CD4-positive, alpha-beta T cell (primary cell): ENCODE measurements at regions of chr3 and their contacts with region 1.

Region 1: GRCh38 chr3:60053526-60054265 is 1003.9 kb upstream of the CFAP20DC start:
- DNase-seq: peak in 6 of 14 experiments; percentile 20 to 70 (median 34)
- ATAC-seq: no peak
- H3K4me3 ChIP-seq: no peak overlapping the region
- H3K4me3 Mint-ChIP-seq: peak overlapping the region; percentile 50
- H3K27ac ChIP-seq: no peak overlapping the region
- H3K27ac Mint-ChIP-seq: peak overlapping the region; percentile 91
- H3K4me1 ChIP-seq: peaks cover 14% of the 10 kb centered on the region
- H3K4me1 Mint-ChIP-seq: peaks cover 88% of the 10 kb centered on the region
- H3K27me3 ChIP-seq: no peaks in the 10 kb centered on the region
- H3K27me3 Mint-ChIP-seq: no peaks in the 10 kb centered on the region
- CTCF ChIP-seq: no peak

Region 2: DNA sequence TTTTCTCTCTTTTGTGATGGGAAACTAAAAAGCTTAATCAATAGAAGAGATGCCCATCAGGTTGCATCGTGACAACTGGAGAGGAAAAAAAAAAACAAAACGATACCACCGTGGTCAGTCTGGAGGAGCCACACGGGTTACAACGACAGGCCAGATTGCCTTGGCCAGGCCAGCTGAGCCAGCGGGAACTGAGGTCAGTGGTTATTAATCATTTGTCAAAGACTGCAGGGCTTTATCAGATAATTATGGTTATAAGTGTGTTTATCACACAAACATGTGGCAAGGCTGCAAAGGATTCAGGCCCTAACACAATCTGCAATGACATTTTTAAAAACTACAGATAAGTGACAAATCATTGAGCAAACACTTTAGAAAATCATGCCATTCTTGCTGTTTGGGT is 1252.2 kb before region 1 on chr3:
- CTCF ChIA-PET with region 1: no interaction called
- POLR2A ChIA-PET with region 1: no interaction called
- intact Hi-C with region 1: no loop called
- DNase-seq: no peak
- ATAC-seq: no peak
- H3K4me3 ChIP-seq: no peak overlapping the region
- H3K4me3 Mint-ChIP-seq: no peak overlapping the region
- H3K27ac ChIP-seq: no peak overlapping the region
- H3K27ac Mint-ChIP-seq: no peak overlapping the region
- H3K4me1 ChIP-seq: no peaks in the 10 kb centered on the region
- H3K4me1 Mint-ChIP-seq: no peaks in the 10 kb centered on the region
- H3K27me3 ChIP-seq: peaks cover 0 to 4% of the 10 kb centered on the region in 2 experiments
- H3K27me3 Mint-ChIP-seq: no peaks in the 10 kb centered on the region
- CTCF ChIP-seq: no peak

Region 3: DNA sequence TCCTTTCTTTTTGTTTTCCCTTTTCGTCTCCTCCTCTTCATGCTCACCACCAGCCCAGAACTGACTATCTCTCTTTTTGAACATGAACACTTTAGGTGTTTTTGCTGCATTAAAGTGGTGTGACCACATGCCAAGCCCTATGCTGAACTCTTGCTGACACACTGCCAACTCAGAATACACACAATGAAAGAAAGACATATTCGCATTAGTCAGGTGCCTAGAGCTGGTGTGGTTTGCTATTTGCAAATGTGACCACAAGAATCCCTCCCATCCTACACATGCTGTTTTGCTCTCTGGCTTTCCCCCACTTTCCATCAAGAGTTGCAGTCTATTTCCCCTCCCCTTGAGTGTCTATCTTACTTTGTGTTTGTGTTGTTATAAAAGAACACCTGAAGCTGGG is 36.1 kb before region 1 on chr3:
- CTCF ChIA-PET with region 1: no interaction called
- POLR2A ChIA-PET with region 1: interaction called, 5 read pairs
- intact Hi-C with region 1: loop called in 1 of 2 experiments (anchors 5 kb)
- DNase-seq: peak in 12 of 14 experiments; percentile 6 to 83 (median 46)
- ATAC-seq: peak; percentile 87
- H3K4me3 ChIP-seq: no peak overlapping the region
- H3K4me3 Mint-ChIP-seq: peak overlapping the region; percentile 74
- H3K27ac ChIP-seq: peak overlapping the region; percentile 35 to 71
- H3K27ac Mint-ChIP-seq: peak overlapping the region; percentile 94
- H3K4me1 ChIP-seq: peaks cover 48% of the 10 kb centered on the region
- H3K4me1 Mint-ChIP-seq: peaks cover 78% of the 10 kb centered on the region
- H3K27me3 ChIP-seq: no peaks in the 10 kb centered on the region
- H3K27me3 Mint-ChIP-seq: no peaks in the 10 kb centered on the region
- CTCF ChIP-seq: no peak

Region 4: GRCh38 chr3:60076331-60076730 is 22.6 kb after region 1 on chr3:
- CTCF ChIA-PET with region 1: interaction called, 12 read pairs
- POLR2A ChIA-PET with region 1: interaction called, 21 read pairs
- intact Hi-C with region 1: loop called in 1 of 2 experiments (anchors 2 kb)
- DNase-seq: no peak
- ATAC-seq: no peak
- H3K4me3 ChIP-seq: peak overlapping the region; percentile 54
- H3K4me3 Mint-ChIP-seq: peak overlapping the region; percentile 75
- H3K27ac ChIP-seq: no peak overlapping the region
- H3K27ac Mint-ChIP-seq: peak overlapping the region; percentile 88
- H3K4me1 ChIP-seq: peaks cover 7% of the 10 kb centered on the region
- H3K4me1 Mint-ChIP-seq: peaks cover 77% of the 10 kb centered on the region
- H3K27me3 ChIP-seq: no peaks in the 10 kb centered on the region
- H3K27me3 Mint-ChIP-seq: no peaks in the 10 kb centered on the region
- CTCF ChIP-seq: no peak